Vagina (tissue), 2 donors: ENCODE measurements at regions of chr14 and their contacts with region 1.

Region 1: DNA sequence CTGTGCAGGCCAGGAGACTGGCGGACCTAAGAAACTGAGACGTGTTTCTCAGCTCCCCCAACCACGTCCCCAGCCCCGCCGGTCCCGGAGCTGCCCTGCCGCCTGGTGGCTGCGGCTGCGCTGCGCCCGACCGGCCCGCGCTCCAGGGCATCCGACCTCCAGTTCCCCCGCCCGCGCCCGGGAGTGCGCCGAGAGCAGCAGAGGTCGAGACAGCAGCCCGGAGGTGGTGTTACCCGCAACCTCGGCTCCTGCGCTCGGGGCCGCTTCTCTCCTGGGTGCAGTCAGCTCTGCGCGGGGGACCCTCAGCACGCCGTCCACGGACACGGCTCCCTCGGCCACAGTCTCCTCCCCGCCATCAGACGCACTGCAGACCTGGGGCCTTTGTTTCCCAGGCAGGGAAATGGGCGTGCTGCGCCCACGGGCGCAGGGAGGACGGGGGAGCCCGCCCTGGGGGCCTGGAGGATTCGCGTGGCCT is 21.6 kb upstream of the GPR132 start:
- DNase-seq: no peak
- H3K4me3 ChIP-seq: peak overlapping the region; percentile 57 to 64
- H3K27ac ChIP-seq: peak overlapping the region; percentile 88
- H3K4me1 ChIP-seq: peaks cover 38% of the 10 kb centered on the region
- H3K27me3 ChIP-seq: no peaks in the 10 kb centered on the region
- CTCF ChIP-seq: peak; percentile 53 to 76 (median 58)
- POLR2A ChIP-seq: no peak

Region 2: DNA sequence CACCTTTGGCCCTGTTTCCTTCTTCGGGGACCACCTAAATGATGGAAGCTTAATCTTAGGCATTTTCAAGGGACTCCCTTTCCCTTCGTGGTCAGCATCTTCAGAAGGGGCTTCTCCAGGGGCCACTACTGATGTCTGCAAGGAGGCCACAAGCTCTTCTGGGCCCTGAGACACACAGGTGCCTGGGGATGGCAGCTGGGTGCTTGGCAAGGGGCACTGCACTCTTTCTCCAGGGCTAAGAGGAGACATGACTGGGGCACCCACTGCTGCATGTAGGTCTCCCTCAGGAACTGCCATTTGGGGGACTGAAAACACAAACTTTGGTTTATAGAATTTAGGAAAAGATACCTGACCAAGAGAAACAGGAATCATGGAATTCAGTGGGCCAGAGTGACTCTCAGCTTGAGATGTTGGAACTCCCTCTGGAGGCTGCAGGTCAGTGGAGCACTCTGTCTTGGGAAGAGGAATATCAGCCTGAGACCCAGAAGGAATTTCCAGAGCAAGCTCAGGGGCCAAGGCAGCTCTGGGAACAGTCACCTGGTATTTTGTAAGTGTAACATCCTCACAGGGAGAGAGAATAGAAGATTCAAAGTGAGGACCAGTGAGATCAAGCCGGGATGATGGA is 146.2 kb before region 1 on chr14:
- intact Hi-C with region 1: no loop called
- DNase-seq: no peak
- H3K4me3 ChIP-seq: no peak overlapping the region
- H3K27ac ChIP-seq: no peak overlapping the region
- H3K4me1 ChIP-seq: no peaks in the 10 kb centered on the region
- H3K27me3 ChIP-seq: no peaks in the 10 kb centered on the region
- CTCF ChIP-seq: no peak
- POLR2A ChIP-seq: no peak

Region 3: DNA sequence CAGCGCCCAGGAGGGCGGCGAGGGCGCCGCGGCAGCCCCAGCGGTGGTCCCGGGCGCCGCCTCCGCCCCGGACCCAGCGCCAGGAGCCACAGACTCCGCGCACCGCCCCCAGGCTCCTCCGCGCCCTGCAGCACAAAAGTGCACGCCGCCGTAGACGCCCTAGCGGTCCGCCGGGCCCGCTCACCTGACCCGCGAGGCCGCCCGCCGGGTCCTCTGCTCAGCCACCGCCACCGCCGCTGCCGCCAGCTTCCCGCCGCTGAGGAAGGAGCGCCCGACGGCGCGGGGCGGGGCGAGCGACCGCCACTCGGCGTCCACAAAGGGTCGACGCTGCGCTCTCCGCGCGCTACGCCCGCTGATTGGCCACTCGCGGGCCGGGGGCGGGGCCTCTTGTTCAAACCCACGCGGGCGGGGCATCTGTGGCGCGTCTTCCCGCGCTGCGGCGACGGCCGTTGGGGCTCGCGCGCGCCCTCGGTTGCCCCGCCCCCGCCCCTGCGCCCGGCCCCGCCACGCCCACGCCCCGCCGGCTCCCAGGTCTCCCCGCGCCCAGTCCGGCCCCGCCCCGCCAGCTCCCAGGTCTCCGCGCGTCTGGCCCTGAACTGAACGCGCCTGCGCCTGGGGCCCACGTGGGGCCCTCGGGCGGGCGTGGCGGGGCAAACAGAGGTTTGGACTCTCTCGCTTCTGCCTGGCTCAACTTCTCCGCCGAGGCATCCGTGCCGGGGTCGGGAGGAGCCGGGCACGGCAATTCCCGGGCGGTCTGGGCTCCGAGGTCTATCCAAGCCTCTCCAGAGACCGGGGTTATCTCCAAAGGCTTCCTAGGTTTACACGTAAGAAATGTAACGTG is 65.8 kb before region 1 on chr14 and contains the start of gene CDCA4:
- intact Hi-C with region 1: no loop called
- DNase-seq: peak in 1 of 2 donors; percentile 93
- H3K4me3 ChIP-seq: peak within 1 kb of the TSS; percentile 63 to 78
- H3K27ac ChIP-seq: peak within 1 kb of the TSS; percentile 90
- H3K4me1 ChIP-seq: peaks cover 49% of the 10 kb centered on the region
- H3K27me3 ChIP-seq: no peaks in the 10 kb centered on the region
- CTCF ChIP-seq: peak in 1 of 3 experiments; percentile 10
- POLR2A ChIP-seq: peak in 1 of 2 donors; percentile 85
- total RNA-seq, gene CDCA4: 15.2 TPM

Region 4: DNA sequence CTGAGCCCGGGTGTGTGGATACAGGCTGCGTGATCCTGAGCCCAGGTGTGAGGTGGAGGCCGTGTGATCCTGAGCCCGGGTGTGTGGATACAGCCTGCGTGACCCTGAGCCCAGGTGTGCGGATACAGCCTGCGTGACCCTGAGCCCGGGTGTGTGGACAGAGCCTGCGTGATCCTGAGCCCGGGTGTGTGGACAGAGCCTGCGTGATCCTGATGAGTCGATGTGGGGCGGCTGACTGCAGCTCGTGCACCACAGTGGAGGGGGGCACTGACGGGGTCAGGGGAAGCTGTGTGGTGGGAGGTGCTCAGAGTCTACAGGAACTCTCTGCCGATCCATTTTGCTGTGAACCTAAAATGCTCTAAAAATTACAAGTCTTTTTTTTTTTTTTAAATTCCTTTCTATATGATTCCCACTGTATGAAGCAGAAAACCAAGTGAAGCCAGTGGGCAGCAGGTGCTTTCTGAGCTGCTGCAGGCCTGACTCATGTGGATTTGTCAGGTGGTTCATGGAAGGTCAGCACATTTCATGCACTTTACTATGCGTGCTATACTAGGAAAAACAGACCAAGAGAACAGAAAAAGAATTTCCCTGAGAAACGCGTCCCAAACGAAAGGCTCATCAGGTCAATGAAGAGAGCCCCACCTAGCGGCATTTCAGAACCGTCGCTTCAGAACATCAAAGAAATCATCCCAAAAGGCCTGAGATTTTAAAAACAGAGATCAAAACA is 194.7 kb after region 1 on chr14:
- intact Hi-C with region 1: loop called (anchors 10 kb)
- DNase-seq: no peak
- H3K4me3 ChIP-seq: no peak overlapping the region
- H3K27ac ChIP-seq: no peak overlapping the region
- H3K4me1 ChIP-seq: peaks cover 6% of the 10 kb centered on the region
- H3K27me3 ChIP-seq: no peaks in the 10 kb centered on the region
- CTCF ChIP-seq: peak in 2 of 3 experiments; percentile 21 to 27
- POLR2A ChIP-seq: no peak

Region 5: DNA sequence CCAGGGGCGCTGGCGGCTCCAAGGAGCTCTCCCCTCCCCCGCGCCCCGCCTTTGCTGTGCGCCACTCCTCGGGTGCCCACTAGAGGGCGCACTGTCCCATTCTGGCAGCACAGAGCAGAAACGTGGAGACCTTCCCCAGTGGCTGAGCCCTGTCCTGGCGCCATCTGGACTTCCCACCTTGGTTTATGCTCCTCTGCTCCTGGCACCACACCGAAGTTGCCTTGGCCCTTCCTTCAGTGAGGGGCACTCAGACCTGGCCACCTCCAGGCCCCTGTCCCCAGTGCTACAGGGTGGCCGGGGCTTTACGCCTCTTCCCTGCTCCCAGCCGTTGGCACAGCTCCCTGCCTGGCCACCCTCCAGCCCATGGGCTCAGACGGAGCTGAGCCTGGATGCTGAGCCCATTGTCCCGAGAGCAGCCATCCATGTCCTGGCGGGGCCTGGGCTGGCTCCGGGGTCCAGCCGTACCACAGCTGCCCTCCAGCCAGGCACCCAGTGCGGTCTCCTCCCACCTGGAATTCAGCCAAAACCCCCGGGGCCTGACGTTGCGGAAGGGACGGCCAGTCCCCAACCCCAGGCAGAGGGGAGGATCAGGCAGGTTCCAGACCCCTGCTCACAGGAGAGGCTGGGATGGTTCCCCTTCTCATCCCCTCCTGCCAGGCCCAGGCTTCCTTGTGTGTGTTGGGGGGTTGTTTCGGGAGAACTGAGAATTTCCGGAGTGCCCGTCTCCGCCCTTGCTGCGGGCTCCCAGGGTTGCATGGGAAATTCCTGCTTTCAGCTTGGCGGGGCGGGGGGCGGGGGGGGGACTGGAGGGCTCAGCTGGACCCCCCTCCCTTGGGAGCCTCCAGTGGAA is 394.3 kb after region 1 on chr14:
- intact Hi-C with region 1: loop called (anchors 5 kb)
- DNase-seq: no peak
- H3K4me3 ChIP-seq: peak overlapping the region; percentile 38 to 45
- H3K27ac ChIP-seq: peak overlapping the region; percentile 97
- H3K4me1 ChIP-seq: peaks cover 92% of the 10 kb centered on the region
- H3K27me3 ChIP-seq: no peaks in the 10 kb centered on the region
- CTCF ChIP-seq: peak; percentile 92 to 97 (median 94)
- POLR2A ChIP-seq: no peak